Body of pancreas (tissue), 4 donors: ENCODE measurements at regions of chr20 and their contacts with region 1.

Region 1: GRCh38 chr20:38997622-38998021 is 35.5 kb downstream of the DHX35 start:
- DNase-seq: no peak
- ATAC-seq: no peak
- H3K4me3 ChIP-seq: no peak overlapping the region
- H3K27ac ChIP-seq: no peak overlapping the region
- H3K4me1 ChIP-seq: no peaks in the 10 kb centered on the region
- H3K27me3 ChIP-seq: no peaks in the 10 kb centered on the region
- CTCF ChIP-seq: no peak
- POLR2A ChIP-seq: no peak

Region 2: GRCh38 chr20:39049684-39050554 is 52.3 kb after region 1 on chr20:
- intact Hi-C with region 1: loop called (anchors 10 kb)
- DNase-seq: peak; percentile 77 to 79 (median 79)
- ATAC-seq: peak; percentile 88
- H3K4me3 ChIP-seq: peak overlapping the region; percentile 42 to 53
- H3K27ac ChIP-seq: peak overlapping the region in 2 of 4 donors; percentile 41 to 45
- H3K4me1 ChIP-seq: peaks cover 13% of the 10 kb centered on the region
- H3K27me3 ChIP-seq: no peaks in the 10 kb centered on the region
- CTCF ChIP-seq: peak; percentile 92 to 99 (median 96)
- POLR2A ChIP-seq: peak in 2 of 3 donors; percentile 46 to 50